ENCODE measurements at regions of chr12 and their contacts with region 1.

Region 1: GRCh38 chr12:12266873-12267741 is at the start of gene LRP6:
- DNase-seq: peak; percentile 32
- ATAC-seq: peak; percentile 96
- H3K4me3 ChIP-seq: peak within 1 kb of the TSS; percentile 74 to 82
- H3K27ac ChIP-seq: peak within 1 kb of the TSS; percentile 92
- H3K4me1 ChIP-seq: peaks cover 6% of the 10 kb centered on the region; the same call in 1 of the 2 replicates
- H3K27me3 ChIP-seq: no peaks in the 10 kb centered on the region
- CTCF ChIP-seq: no peak
- total RNA-seq, gene LRP6: 22.0 TPM

Region 2: DNA sequence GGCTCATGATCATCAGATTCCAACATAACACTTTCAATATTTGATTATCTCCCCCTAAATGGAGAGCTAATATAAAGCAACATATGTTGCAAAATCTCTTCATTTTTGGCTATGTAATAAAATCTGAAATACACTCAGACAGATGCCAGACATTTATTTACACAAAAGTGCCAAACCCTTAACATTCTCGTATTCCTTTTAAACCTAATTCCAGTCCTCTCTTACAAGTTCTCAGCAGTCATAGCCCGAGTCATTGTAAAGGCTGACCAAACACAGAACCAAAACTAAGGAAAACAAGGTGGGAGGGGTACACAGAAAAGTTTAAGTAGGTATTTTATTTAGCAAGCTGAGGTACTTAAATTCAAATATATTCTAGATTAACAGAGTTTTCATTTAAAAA is 81.7 kb before region 1 on chr12:
- CTCF ChIA-PET with region 1: interaction called, 10 read pairs
- POLR2A ChIA-PET with region 1: no interaction called
- in situ Hi-C with region 1: no loop called
- intact Hi-C with region 1: no loop called
- DNase-seq: no peak
- ATAC-seq: no peak
- H3K4me3 ChIP-seq: no peak overlapping the region
- H3K27ac ChIP-seq: no peak overlapping the region
- H3K4me1 ChIP-seq: no peaks in the 10 kb centered on the region
- H3K27me3 ChIP-seq: no peaks in the 10 kb centered on the region
- CTCF ChIP-seq: no peak

Region 3: GRCh38 chr12:12449467-12450025 is 182.4 kb after region 1 on chr12:
- CTCF ChIA-PET with region 1: interaction called, 11 read pairs
- POLR2A ChIA-PET with region 1: no interaction called
- in situ Hi-C with region 1: no loop called
- intact Hi-C with region 1: no loop called
- DNase-seq: no peak
- ATAC-seq: no peak
- H3K4me3 ChIP-seq: no peak overlapping the region
- H3K27ac ChIP-seq: no peak overlapping the region
- H3K4me1 ChIP-seq: no peaks in the 10 kb centered on the region
- H3K27me3 ChIP-seq: no peaks in the 10 kb centered on the region
- CTCF ChIP-seq: no peak